Endothelial cell of umbilical vein (primary cell): ENCODE measurements at regions of chr9 and their contacts with region 1.

Region 1: GRCh38 chr9:125241000-125241862 is at the start of gene HSPA5:
- DNase-seq: peak; percentile 100
- H3K4me3 ChIP-seq: peak within 1 kb of the TSS; percentile 77 to 97 (median 96)
- H3K27ac ChIP-seq: peak within 1 kb of the TSS; percentile 89
- H3K4me1 ChIP-seq: peaks cover 43% of the 10 kb centered on the region
- H3K27me3 ChIP-seq: no peaks in the 10 kb centered on the region
- CTCF ChIP-seq: peak in 1 of 2 donors; percentile 22
- POLR2A ChIP-seq: peak; percentile 100
- total RNA-seq, gene HSPA5: 514 and 538 TPM in 2 replicates

Region 2: DNA sequence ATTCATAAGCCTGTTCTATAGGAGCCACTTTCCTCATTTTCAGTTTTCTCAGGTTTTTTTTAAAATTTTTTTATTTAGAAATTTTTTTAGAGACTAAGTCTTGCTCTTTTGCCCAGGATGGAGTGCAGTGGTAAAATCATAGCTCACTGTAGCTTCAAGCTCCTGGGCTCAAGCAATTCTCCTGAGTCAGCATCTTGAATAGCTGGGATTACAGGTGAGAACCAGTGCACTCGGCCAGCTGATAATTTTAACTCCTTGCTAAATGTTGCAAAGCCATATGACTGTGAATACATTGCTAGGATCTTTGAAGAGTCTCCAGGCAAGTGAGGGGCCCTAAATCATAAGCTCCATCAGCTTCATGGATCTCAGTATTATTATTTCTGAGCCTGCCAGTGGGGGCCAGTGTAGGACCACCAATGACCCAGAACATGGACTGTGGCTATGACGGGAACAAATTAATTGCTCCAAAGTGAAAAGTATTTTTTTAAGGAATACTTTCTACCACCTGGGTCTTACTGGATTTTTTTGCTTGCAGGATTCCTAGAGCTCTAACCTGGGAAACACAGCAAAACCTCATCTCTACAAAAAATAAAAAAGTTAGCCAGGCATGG is 14.7 kb after region 1 on chr9:
- CTCF ChIA-PET with region 1: interaction called, 8 read pairs
- POLR2A ChIA-PET with region 1: interaction called, 13 read pairs
- dilution Hi-C with region 1: no loop called
- intact Hi-C with region 1: loop called (anchors 1 kb)
- DNase-seq: no peak
- H3K4me3 ChIP-seq: no peak overlapping the region
- H3K27ac ChIP-seq: no peak overlapping the region
- H3K4me1 ChIP-seq: no peaks in the 10 kb centered on the region
- H3K27me3 ChIP-seq: no peaks in the 10 kb centered on the region
- CTCF ChIP-seq: peak; percentile 20 to 47
- POLR2A ChIP-seq: no peak

Region 3: GRCh38 chr9:125261501-125262293 is 20.5 kb after region 1 on chr9 and contains the start of gene GAPVD1:
- CTCF ChIA-PET with region 1: interaction called, 8 read pairs
- POLR2A ChIA-PET with region 1: interaction called, 12 read pairs
- dilution Hi-C with region 1: no loop called
- intact Hi-C with region 1: loop called (anchors 1 kb)
- DNase-seq: peak; percentile 90
- H3K4me3 ChIP-seq: peak within 1 kb of the TSS; percentile 89 to 98 (median 95)
- H3K27ac ChIP-seq: peak within 1 kb of the TSS; percentile 49
- H3K4me1 ChIP-seq: peaks cover 21% of the 10 kb centered on the region
- H3K27me3 ChIP-seq: no peaks in the 10 kb centered on the region
- CTCF ChIP-seq: peak; percentile 18 to 41
- POLR2A ChIP-seq: peak; percentile 77
- total RNA-seq, gene GAPVD1: 49.2 and 53.2 TPM in 2 replicates